Pancreas (tissue), 10 donors: ENCODE measurements at regions of chr19 and their contacts with region 1.

Region 1: GRCh38 chr19:13597640-13598039 is 91.4 kb upstream of the CACNA1A start:
- DNase-seq: peak in 3 of 6 donors; percentile 21 to 46 (median 22)
- ATAC-seq: peak; percentile 69 to 92 (median 90)
- H3K4me3 ChIP-seq: no peak overlapping the region
- H3K27ac ChIP-seq: no peak overlapping the region
- H3K4me1 ChIP-seq: no peaks in the 10 kb centered on the region
- H3K27me3 ChIP-seq: no peaks in the 10 kb centered on the region
- CTCF ChIP-seq: peak in 3 of 4 donors; percentile 11 to 38 (median 29)

Region 2: DNA sequence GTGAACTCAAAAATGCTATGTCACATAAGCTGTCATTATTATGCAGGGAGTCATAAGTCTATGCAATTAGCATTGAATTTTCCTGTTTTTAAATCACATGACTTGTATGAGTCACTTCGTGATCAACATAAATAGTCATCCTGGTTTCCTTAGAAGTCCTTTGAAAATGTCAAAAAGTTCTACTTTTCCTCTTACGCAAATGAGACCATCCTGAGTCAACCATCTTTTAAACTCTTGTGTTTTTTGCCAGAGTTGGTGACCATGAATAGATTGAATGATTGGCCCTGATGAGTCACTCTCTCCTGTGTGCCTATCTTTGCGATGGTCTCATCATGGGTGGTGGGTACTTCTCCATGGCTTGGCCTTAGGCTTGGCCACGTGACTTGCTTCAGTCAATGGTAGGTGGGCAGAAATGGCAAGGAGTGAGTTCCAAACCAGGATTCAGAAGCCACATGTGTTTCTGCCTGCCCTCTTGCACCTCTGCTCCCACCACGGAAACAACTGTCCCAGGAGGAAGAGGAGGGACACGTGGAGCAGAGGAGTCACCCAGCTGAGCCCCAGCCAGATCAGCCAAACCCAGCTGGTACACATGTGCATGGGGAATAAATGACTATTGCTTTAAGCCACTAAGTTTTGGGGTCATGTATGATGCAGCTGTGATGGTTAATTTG is 32.2 kb after region 1 on chr19:
- intact Hi-C with region 1: no loop called
- DNase-seq: no peak
- ATAC-seq: no peak
- H3K4me3 ChIP-seq: no peak overlapping the region
- H3K27ac ChIP-seq: no peak overlapping the region
- H3K4me1 ChIP-seq: no peaks in the 10 kb centered on the region
- H3K27me3 ChIP-seq: no peaks in the 10 kb centered on the region
- CTCF ChIP-seq: no peak

Region 3: DNA sequence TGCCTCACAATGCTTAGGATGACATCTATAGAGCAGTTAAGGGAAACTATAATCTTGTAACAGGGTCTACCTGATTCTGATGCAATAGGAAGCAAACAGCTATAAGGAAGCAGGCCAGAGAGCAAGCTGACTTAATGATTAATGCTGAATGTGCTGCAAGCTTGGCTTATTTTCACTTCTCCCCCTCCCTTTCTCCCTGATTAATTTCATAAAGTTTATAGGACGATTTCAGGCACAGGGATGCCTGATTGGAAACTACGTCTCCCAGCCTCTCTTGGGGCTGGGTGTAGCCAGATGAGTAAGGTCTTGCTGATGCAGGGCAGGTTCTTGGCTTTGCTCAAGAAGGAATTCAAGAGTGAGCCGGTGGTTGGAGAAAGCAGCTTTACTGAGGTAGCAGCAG is 83.9 kb after region 1 on chr19:
- intact Hi-C with region 1: no loop called
- DNase-seq: no peak
- ATAC-seq: no peak
- H3K4me3 ChIP-seq: no peak overlapping the region
- H3K27ac ChIP-seq: no peak overlapping the region
- H3K4me1 ChIP-seq: no peaks in the 10 kb centered on the region
- H3K27me3 ChIP-seq: no peaks in the 10 kb centered on the region
- CTCF ChIP-seq: no peak

Region 4: GRCh38 chr19:13718733-13719132 is 121.1 kb after region 1 on chr19:
- intact Hi-C with region 1: loop called in 2 of 3 experiments (anchors 10 kb)
- DNase-seq: peak in 1 of 6 donors; percentile 20
- ATAC-seq: peak in 3 of 4 donors; percentile 46 to 84 (median 79)
- H3K4me3 ChIP-seq: no peak overlapping the region
- H3K27ac ChIP-seq: no peak overlapping the region
- H3K4me1 ChIP-seq: no peaks in the 10 kb centered on the region
- H3K27me3 ChIP-seq: no peaks in the 10 kb centered on the region
- CTCF ChIP-seq: no peak

Region 5: GRCh38 chr19:13727798-13728197 is 130.2 kb after region 1 on chr19:
- intact Hi-C with region 1: loop called in 1 of 3 experiments (anchors 10 kb)
- DNase-seq: no peak
- ATAC-seq: no peak
- H3K4me3 ChIP-seq: no peak overlapping the region
- H3K27ac ChIP-seq: no peak overlapping the region
- H3K4me1 ChIP-seq: peaks cover 0 to 9% (median 7%) of the 10 kb centered on the region in 3 donors
- H3K27me3 ChIP-seq: no peaks in the 10 kb centered on the region
- CTCF ChIP-seq: no peak

Region 6: DNA sequence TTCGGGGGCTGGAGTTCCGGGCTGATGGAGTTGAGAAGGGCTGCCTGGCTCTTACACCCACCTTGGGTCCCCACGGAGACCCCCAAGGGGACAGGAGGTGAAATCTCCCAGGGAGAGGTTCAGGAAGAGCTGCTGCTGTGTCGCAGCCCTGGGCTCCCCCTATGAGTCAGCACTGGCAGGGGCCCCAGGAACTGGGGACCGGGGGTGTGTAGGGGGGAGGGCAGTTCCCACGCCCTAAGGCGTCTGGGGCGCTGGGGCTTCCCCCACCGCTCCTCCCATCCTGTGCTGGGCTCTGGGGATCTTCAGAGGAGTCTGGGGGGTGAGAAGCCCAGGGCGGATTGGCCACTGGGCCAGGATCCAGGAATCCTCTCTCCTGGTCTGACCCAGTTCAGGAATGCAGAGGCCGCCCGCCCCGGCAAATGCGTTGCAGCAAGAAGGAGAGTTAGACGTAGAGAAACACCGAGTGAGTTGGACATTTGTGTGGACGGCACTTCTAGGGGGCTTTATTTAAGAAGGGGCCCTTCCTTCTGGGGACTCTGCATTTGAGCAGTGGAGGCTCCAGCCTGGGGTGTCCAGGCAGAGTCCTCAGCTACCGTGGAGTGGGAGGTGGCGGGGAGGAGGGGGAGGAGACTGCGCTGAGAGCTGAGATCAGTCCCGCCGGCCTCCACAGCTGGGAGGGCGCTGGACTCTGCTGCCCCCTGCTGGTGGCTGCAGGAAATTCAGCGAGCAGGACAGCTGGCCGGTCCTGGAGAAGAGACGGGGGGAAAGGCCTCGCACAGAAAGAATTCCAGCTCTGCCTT is 264.3 kb after region 1 on chr19:
- intact Hi-C with region 1: loop called in 1 of 3 experiments (anchors 5 kb)
- DNase-seq: peak; percentile 89 to 99 (median 95)
- ATAC-seq: peak; percentile 84 to 93 (median 90)
- H3K4me3 ChIP-seq: peak overlapping the region; percentile 14 to 42 (median 28)
- H3K27ac ChIP-seq: peak overlapping the region; percentile 59 to 87 (median 75)
- H3K4me1 ChIP-seq: peaks cover 3 to 8% (median 5%) of the 10 kb centered on the region in 3 donors
- H3K27me3 ChIP-seq: no peaks in the 10 kb centered on the region
- CTCF ChIP-seq: peak; percentile 97 to 100 (median 98)

Region 7: GRCh38 chr19:14117668-14118164 is 520.1 kb after region 1 on chr19 and contains the start of gene PRKACA:
- intact Hi-C with region 1: no loop called
- DNase-seq: peak; percentile 98 to 100 (median 99)
- ATAC-seq: peak; percentile 91 to 94 (median 91)
- H3K4me3 ChIP-seq: peak within 1 kb of the TSS; percentile 79 to 92 (median 86)
- H3K27ac ChIP-seq: peak within 1 kb of the TSS; percentile 89 to 97 (median 95)
- H3K4me1 ChIP-seq: peaks cover 21 to 42% (median 23%) of the 10 kb centered on the region in 3 donors
- H3K27me3 ChIP-seq: no peaks in the 10 kb centered on the region
- CTCF ChIP-seq: no peak
- total RNA-seq, gene PRKACA: 25.3 to 42.9 (median 35.5) TPM